ENCODE measurements at regions of chr1 and their contacts with region 1.

Region 1: GRCh38 chr1:4511374-4511773 is 143.0 kb upstream of the AJAP1 start:
- DNase-seq: no peak

Region 2: GRCh38 chr1:3249631-3250501 is 1261.5 kb before region 1 on chr1:
- intact Hi-C with region 1: loop called in 1 of 2 experiments (anchors 5 kb)
- DNase-seq: no peak

Region 3: DNA sequence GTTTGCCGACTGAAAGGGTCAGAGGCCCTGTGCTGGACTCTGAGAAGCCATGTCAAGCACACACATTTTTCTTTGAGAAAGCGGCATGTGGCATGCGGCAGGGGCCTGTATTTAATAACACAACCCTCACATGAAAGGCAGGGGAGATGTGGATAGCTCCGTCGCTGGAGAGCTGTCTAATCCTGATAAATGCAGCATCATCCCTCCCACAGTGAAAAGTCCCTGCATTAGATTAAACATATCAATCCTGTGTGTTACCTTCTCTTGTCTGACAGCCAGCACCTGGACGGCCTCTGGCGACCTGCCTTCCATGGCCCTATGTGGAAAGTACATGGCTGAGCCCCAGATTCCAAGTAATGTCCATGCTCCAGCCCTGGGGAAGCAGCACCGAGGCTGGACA is 170.0 kb before region 1 on chr1:
- intact Hi-C with region 1: no loop called
- DNase-seq: no peak

Region 4: GRCh38 chr1:4468804-4469514 is 42.4 kb before region 1 on chr1:
- intact Hi-C with region 1: no loop called
- DNase-seq: peak; percentile 48

Region 5: GRCh38 chr1:4551706-4552105 is 40.3 kb after region 1 on chr1:
- intact Hi-C with region 1: loop called in 1 of 2 experiments (anchors 1 kb)
- DNase-seq: no peak

Measured in posterior vena cava (tissue), 2 donors.